ENCODE measurements at regions of chr7 and their contacts with region 1.

Region 1: GRCh38 chr7:143416565-143417149 is 8.0 kb upstream of the EPHA1 start:
- DNase-seq: no peak
- H3K4me3 ChIP-seq: no peak overlapping the region
- H3K27ac ChIP-seq: no peak overlapping the region
- H3K27me3 ChIP-seq: peaks cover 0 to 27% (median 0%) of the 10 kb centered on the region in 45 donors
- CTCF ChIP-seq: peak; percentile 73 to 97 (median 87)

Region 2: DNA sequence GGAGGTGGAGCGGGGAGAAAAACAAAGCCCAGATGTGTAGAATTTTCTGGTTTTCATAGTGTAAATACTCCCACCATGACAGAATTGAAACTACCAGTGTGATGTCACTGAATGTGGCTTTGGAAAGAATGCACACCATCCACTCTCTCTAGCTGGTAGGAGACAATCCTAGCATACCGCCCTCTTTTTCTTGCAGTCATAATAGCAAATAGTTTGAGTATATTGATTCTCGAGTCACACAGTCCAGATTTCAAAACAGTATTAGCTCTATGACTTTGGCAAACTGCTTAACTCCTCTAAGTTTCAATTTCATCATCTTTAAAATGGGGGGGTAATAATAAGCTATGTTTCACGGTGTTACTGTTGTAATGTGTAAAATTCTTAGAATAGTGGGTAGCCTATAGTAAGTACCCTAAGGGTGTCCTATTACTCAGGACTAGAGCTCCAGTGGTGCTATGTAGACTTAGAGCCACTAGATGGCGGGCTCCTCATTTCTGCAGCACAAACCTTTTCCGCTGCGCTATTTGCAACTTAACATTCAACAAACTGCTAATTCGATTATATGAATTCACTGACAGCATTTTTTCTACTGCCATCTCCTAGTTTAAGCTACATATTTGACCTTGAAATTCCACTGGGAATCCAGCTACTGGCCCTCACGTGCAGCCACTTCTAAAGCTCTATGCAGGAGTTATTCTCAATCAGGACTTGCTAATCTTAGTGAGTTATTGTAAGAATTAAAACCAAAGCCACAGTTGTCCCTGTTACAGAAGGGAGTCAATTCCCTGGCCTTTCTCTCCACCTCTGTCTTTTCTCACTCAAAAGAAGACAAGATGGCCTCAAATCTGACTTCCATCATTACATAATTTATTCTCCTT is 176.1 kb before region 1 on chr7:
- intact Hi-C with region 1: loop called (anchors 2 to 5 kb)
- DNase-seq: peak; percentile 48 to 83 (median 68)
- H3K4me3 ChIP-seq: peak overlapping the region in 19 of 59 donors; percentile 5 to 47 (median 17)
- H3K27ac ChIP-seq: peak overlapping the region in 13 of 59 donors; percentile 1 to 80 (median 41)
- H3K27me3 ChIP-seq: no peaks in the 10 kb centered on the region
- CTCF ChIP-seq: peak; percentile 81 to 99 (median 95)

Region 3: DNA sequence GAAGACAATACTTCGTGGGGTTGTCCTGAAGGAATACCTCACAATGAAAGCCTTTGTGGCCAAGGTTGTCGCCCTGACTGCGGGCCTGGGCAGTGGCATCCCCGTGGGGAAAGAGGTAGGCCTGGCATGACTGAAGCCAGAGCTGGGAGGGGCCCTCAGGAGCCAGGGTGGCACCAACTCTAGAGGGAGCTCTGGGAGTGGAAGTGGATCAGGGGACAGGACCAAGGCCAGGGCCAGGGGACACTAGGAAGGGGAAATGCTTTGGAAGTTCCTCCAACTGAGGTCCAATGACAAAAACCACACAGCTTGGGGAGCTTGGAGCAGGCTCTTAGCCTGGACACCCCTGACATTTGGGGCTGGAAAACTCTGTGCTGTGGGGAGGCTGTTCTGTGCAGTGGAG is 94.9 kb before region 1 on chr7:
- intact Hi-C with region 1: loop called in 1 of 2 experiments (anchors 5 kb)
- DNase-seq: no peak
- H3K4me3 ChIP-seq: no peak overlapping the region
- H3K27ac ChIP-seq: no peak overlapping the region
- H3K27me3 ChIP-seq: no peaks in the 10 kb centered on the region
- CTCF ChIP-seq: peak in 43 of 56 donors; percentile 12 to 60 (median 32)

Region 4: DNA sequence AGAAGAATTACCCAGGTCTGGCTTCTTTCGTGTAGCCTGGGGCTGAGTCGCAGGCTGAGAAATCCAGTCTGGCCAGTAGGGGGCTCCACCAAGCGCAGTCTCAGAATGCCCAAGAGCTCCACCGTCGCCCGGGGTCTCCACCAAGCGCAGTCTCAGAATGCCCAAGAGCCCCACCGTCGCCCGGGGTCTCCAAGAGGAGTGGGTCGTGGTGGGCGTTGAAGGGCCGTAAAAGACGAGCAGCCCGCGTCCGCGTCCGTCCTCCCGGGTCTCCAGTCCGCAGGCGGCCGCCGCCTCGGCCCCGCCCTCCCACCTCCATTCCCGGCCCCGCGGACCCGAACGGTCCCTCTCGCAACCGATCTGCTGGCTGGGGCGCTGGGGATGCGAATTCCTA is 36.4 kb before region 1 on chr7:
- intact Hi-C with region 1: loop called in 1 of 2 experiments (anchors 5 kb)
- DNase-seq: peak; percentile 80 to 89 (median 86)
- H3K4me3 ChIP-seq: peak overlapping the region; percentile 67 to 99 (median 91)
- H3K27ac ChIP-seq: peak overlapping the region; percentile 80 to 100 (median 97)
- H3K27me3 ChIP-seq: no peaks in the 10 kb centered on the region
- CTCF ChIP-seq: peak; percentile 74 to 98 (median 89)

Region 5: GRCh38 chr7:143960813-143961610 is 544.4 kb after region 1 on chr7:
- intact Hi-C with region 1: no loop called
- DNase-seq: no peak
- H3K4me3 ChIP-seq: no peak overlapping the region
- H3K27ac ChIP-seq: no peak overlapping the region
- H3K27me3 ChIP-seq: peaks cover 0 to 2% (median 0%) of the 10 kb centered on the region in 45 donors
- CTCF ChIP-seq: no peak

Measured in dorsolateral prefrontal cortex (tissue), 120 donors.